HEK293T (cell line): ENCODE measurements at regions of chr1 and their contacts with region 1.

Region 1: DNA sequence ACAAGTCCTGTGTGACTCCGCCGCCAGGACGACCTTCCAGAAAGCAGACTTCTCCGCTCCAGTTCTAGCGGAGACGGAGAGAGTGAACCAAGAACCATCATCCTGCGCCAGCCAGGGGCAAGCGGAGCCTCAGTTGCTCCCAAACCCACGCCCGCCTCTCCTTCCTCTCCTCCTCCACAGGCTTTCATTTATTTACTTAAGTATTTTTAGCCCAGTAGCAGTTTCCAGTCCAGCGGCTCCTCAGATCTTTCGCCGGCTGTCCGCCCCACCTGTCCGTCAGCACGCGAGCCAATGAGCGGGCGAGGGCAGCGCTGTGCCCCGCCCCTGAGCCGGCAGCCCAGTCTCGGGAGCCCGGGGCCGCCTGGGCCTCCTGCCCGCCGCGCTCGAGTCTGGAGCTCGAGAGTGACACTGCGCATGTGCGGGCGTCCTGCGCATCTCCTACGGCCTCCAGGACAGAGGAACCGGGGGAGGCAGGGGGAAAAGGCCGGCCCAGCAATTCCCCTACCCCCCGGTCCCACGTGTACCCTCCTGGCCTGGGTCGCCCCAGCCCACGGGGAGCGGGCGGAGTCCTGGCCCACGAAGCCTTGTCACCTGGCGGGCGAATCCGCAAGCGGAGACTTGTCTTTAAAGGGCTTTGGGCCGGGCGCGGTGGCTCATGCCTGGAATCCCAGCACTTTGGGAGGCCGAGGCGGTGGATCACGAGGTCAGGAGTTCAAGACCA is at the start of gene FALEC:
- DNase-seq: peak; percentile 100

Region 2: DNA sequence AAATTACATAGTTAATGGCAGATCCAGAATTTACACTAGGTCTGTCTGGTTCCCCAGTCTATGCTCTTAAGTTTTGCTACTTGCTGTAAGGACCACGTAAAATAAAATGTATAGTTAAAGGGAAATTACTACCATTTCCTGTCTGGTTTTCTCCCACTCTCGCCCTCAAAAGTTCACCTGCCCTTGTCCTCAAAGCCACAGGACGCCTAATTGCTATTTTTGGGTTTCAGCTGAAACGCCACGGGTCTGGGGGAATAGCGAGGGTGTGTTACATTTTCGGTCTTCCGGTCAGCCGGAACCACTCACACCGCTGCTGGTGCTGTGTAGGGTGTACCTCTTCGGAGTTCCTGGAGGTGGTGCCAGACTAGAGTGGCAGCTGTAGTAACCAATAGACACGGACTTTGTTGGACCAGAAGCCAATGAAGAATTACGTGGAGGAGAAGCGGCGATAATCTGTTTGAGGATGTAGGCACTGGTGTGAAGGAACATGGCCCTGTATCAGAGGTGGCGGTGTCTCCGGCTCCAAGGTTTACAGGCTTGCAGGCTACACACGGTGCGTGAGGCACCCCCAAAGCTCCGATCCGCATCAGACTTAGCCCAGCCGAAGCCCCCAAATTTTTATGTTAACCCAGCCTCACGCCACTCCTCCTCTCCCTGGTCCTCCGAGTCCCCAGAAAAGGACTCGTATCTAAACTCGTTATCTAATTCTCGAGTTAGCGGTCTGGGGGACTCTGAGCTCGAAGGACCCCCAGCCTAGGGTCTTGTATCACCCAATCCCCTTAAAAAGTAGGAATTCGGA is 28.3 kb before region 1 on chr1 and contains the start of gene TARS2:
- CTCF ChIA-PET with region 1: no interaction called
- POLR2A ChIA-PET with region 1: interaction called, 10 read pairs
- DNase-seq: peak; percentile 100

Region 3: DNA sequence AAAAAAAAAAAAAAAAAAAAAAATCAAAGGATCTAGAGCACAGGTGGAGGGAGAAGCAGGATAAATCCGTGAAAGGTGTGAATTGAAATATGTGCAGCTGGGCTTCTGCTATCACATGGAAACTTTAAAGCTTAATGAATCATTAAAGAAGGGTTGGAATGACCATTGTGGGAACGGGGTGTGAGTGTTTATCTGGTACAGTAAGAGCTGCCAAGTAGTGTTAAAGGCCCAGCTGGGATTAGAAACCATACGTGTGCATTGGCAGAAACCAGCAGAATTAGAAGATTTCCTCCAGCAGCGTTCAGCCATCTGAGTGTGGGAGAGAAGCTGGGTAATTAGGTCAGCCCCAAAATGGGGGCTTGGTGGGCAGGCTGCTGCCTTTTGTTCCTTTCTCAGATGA is 13.5 kb after region 1 on chr1:
- CTCF ChIA-PET with region 1: interaction called, 21 read pairs
- POLR2A ChIA-PET with region 1: interaction called, 22 read pairs
- DNase-seq: no peak

Region 4: GRCh38 chr1:150561974-150562445 is 46.5 kb after region 1 on chr1:
- CTCF ChIA-PET with region 1: interaction called, 16 read pairs
- POLR2A ChIA-PET with region 1: interaction called, 3 read pairs
- DNase-seq: peak; percentile 89